Vagina (tissue), 2 donors: ENCODE measurements at regions of chr12 and their contacts with region 1.

Region 1: DNA sequence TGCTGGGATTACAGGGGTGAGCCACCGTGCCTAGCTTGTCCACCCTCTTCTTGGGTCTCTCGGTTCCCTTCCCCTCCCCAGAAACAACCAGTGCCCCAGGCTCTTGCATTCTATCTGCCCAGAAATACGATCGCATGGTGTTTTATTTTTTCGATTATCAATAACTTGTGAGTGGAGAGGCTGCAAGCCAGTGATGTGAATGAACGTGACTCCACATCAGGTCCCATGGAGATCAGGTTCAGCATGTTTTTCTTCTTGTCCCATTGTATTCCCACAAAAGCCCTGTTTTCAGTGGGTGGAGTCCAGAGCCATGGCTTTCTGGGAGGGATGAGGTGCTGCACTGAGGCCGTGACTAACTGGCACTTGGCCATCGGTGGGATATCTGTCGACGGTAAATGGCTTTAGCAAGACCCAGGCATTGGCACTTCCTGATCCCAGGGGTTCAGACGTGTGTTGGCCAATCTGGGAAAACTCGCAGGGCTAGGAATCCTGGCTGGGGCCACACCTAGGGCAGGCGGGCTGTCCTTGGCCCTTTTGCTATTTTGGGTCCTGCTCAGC is 12.7 kb upstream of the HNF1A start:
- DNase-seq: no peak
- H3K4me3 ChIP-seq: no peak overlapping the region
- H3K27ac ChIP-seq: no peak overlapping the region
- H3K4me1 ChIP-seq: peaks cover 12% of the 10 kb centered on the region
- H3K27me3 ChIP-seq: no peaks in the 10 kb centered on the region
- CTCF ChIP-seq: no peak
- POLR2A ChIP-seq: no peak

Region 2: DNA sequence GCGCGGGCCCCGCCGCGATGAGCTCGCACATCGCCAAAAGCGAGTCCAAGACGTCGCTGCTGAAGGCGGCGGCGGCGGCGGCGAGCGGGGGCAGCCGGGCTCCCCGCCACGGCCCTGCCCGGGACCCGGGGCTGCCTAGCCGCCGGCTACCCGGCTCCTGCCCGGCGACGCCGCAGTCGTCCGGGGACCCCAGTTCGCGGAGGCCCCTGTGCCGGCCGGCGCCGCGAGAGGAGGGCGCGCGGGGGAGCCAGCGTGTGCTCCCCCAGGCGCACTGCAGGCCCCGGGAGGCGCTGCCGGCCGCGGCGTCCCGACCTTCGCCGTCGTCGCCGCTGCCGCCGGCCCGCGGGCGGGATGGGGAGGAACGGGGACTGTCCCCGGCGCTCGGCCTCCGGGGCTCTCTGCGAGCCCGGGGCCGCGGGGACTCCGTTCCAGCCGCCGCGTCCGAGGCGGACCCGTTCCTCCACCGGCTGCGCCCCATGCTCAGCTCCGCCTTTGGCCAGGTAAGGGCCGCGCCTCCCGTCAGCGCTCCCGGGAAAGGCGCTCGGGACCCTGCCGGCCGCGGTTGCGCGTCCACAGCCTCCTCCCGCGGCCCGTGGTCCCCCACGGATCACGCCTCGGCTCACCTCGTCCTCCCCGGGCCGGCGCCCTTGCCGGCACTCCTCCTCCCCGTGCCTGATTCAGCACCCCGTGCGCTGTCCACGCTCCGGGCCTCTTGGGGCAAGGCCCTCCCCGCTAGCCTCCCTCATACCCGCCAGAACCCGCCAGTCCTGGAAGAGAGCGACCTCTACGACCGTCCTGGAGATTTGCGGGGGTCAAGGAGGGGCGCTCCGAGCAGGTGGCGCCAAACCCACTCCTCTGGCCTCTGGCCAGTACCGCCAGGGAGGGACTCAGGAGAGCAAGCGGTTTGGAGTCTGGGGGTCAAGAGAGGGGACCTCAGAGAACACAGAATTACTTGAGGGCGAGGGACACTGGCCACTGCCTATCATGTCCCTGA is 324.5 kb before region 1 on chr12:
- intact Hi-C with region 1: loop called (anchors 5 kb)
- DNase-seq: no peak
- H3K4me3 ChIP-seq: peak overlapping the region; percentile 35 to 55
- H3K27ac ChIP-seq: no peak overlapping the region
- H3K4me1 ChIP-seq: peaks cover 13% of the 10 kb centered on the region
- H3K27me3 ChIP-seq: no peaks in the 10 kb centered on the region
- CTCF ChIP-seq: no peak
- POLR2A ChIP-seq: no peak

Region 3: GRCh38 chr12:120984351-120984898 is 18.8 kb after region 1 on chr12:
- intact Hi-C with region 1: no loop called
- DNase-seq: no peak
- H3K4me3 ChIP-seq: no peak overlapping the region
- H3K27ac ChIP-seq: no peak overlapping the region
- H3K4me1 ChIP-seq: no peaks in the 10 kb centered on the region
- H3K27me3 ChIP-seq: no peaks in the 10 kb centered on the region
- CTCF ChIP-seq: no peak
- POLR2A ChIP-seq: no peak